Activated T-helper 2 cell treated with anti-CD3 and anti-CD28 coated beads, Interferon-gamma antibody, Interleukin-2, Interleukin-4, amounts not matched to agents 10 μg/mL and 5 μg/mL and 100 μg/mL, durations not matched to agents 14 hours and 24 hours and 36 hours (primary cell): ENCODE measurements at regions of chr2 and their contacts with region 1.

Region 1: GRCh38 chr2:99365661-99366060 is 28.5 kb downstream of the EIF5B start:
- DNase-seq: no peak
- H3K4me3 Mint-ChIP-seq: no peak overlapping the region
- H3K27ac Mint-ChIP-seq: no peak overlapping the region
- H3K4me1 Mint-ChIP-seq: no peaks in the 10 kb centered on the region
- H3K27me3 Mint-ChIP-seq: no peaks in the 10 kb centered on the region

Region 2: DNA sequence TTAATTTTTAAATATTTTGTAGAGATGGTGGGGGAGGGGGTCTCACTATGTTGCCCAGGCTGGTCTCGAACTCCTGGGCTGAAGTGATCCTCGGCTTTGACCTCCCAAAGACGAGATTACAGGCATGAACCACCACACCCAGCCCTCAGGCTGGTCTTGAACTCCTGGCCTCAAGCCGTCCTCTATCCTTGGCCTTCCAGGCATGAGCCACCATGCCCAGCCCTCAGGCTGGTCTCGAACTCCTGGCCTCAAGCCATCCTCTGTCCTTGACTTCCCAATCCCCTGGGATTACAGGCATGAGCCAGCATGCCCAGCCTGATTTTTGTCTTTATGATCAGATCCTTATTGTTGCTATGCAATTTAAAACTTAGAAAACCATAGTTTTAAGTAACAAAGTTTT is 54.2 kb before region 1 on chr2:
- intact Hi-C with region 1: no loop called
- DNase-seq: no peak
- H3K4me3 Mint-ChIP-seq: no peak overlapping the region
- H3K27ac Mint-ChIP-seq: no peak overlapping the region
- H3K4me1 Mint-ChIP-seq: no peaks in the 10 kb centered on the region
- H3K27me3 Mint-ChIP-seq: no peaks in the 10 kb centered on the region

Region 3: DNA sequence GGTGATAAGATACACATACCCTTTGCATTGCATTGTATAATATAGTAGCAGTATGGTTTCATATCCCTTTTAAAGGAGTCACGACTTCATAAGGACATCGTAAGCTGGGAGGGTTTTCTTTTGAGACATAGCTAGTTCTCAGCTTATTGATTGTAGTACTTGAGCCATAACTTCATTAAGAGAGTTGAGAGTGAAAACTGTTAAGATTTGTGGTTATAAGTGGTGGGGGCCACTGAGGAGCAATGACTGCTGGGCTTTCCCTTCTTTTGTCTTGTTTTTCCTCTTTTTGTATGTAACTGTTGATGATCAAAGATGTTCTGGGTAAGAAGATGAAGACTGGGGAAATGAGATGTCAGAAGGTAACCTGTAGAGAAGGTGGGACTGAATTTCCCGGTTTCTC is 17.5 kb before region 1 on chr2:
- intact Hi-C with region 1: no loop called
- DNase-seq: no peak
- H3K4me3 Mint-ChIP-seq: no peak overlapping the region
- H3K27ac Mint-ChIP-seq: peak overlapping the region; percentile 16
- H3K4me1 Mint-ChIP-seq: peaks cover 30% of the 10 kb centered on the region
- H3K27me3 Mint-ChIP-seq: no peaks in the 10 kb centered on the region

Region 4: GRCh38 chr2:99414566-99414965 is 48.9 kb after region 1 on chr2:
- intact Hi-C with region 1: loop called (anchors 5 kb)
- DNase-seq: no peak
- H3K4me3 Mint-ChIP-seq: no peak overlapping the region
- H3K27ac Mint-ChIP-seq: peak overlapping the region; percentile 25
- H3K4me1 Mint-ChIP-seq: peaks cover 5% of the 10 kb centered on the region
- H3K27me3 Mint-ChIP-seq: no peaks in the 10 kb centered on the region